Activated B cell treated with CpG ODN at 0.5 μM for 24 hours (primary cell): ENCODE measurements at regions of chr19 and their contacts with region 1.

Region 1: DNA sequence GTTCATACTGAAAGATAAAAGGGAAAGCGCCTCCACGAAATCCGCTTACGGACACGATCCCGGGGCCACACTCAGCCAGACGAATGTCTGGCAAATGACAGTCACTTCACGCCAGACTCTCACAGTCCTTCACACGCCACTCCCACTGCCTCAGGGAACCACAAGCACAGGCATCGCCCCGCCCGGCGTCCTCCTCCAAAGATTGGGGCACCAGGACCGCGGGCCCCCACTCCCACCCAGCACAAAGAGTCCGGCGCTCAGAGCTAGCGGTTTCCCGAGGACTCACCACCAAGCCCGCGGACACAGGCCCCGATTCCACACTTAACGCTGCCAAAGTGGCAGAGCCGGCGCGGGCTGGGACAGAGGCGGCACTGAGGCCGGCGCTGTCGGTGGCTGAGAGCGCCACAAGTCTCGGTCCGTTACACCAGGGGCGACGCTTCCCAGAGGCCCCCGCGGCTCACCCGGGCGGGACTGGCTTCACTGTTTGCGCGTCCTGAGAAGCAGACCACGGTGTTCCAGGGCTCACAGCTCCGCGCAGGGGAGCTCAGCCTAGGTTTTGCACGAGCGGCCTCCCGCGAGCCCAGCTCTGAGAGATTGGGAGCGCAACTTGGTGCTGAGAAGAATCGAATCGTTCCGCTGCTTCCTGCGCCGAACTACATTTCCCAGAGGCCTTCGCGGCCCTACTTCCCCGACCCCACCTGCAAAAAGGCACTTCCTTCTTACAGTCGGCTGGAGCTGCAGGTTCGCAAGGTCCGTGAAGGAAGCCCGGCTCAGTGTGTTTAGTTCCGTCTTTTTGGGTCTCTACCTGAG is at the start of gene ZNF569:
- DNase-seq: peak; percentile 82
- ATAC-seq: peak; percentile 69
- H3K4me3 Mint-ChIP-seq: peak within 1 kb of the TSS; percentile 99
- H3K27ac Mint-ChIP-seq: peak within 1 kb of the TSS; percentile 97
- H3K4me1 Mint-ChIP-seq: peaks cover 42% of the 10 kb centered on the region
- H3K27me3 Mint-ChIP-seq: no peaks in the 10 kb centered on the region
- CTCF ChIP-seq: no peak
- total RNA-seq, gene ZNF569: 6.1 and 6.8 TPM in 2 replicates

Region 2: GRCh38 chr19:36687214-36688056 is 779.6 kb before region 1 on chr19 and contains the start of gene ZNF567:
- CTCF ChIA-PET with region 1: no interaction called
- POLR2A ChIA-PET with region 1: no interaction called
- intact Hi-C with region 1: loop called (anchors 2 kb)
- DNase-seq: peak; percentile 95
- ATAC-seq: peak; percentile 93
- H3K4me3 Mint-ChIP-seq: peak within 1 kb of the TSS; percentile 98
- H3K27ac Mint-ChIP-seq: peak within 1 kb of the TSS; percentile 89
- H3K4me1 Mint-ChIP-seq: peaks cover 34% of the 10 kb centered on the region
- H3K27me3 Mint-ChIP-seq: no peaks in the 10 kb centered on the region
- CTCF ChIP-seq: no peak
- total RNA-seq, gene ZNF567: 13.3 and 15.0 TPM in 2 replicates

Region 3: DNA sequence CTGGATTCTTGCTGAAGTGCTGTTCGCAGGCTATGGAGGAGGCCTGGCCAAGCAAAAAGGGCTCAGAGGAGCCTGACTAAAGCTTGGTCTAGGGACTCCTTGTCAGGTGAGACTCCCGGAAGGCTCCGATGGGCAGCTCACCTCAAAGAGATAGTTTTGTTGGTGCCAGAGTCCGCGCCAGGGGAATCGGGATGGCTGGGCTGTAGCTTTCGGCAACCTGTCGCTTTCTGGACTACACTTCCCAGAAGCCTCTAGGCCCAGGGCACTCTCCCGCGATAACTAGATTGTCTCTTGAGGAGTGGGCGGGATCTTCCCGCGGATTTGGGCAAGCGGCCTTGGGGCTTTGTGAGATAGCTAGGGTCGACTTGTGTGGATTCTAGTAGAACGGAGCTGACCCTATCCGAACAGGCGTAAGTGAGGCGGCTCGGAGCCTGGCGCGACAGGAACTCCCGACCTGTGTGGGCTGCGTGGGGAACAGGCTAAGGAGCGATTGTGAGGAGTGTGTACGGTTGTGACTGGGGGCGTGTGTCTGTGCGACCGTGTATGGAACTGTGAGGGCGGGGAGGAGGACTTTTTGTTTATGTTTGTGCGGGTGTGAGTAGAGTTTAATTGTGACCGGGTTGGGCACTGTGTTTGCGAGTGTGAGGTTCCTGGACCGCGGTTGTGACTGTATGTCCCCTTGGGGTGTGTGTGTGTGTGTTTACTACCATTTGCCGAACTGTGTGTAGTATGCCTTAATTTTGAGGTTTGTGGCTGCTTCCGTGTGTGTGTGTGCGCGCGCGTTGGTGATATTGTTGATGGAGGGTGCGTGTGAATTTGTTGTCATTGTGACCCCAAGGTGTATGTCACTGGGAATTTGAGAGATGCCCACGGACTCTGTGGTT is 616.2 kb before region 1 on chr19 and contains the start of gene ZNF345:
- CTCF ChIA-PET with region 1: no interaction called
- POLR2A ChIA-PET with region 1: interaction called, 4 read pairs
- intact Hi-C with region 1: loop called (anchors 5 kb)
- DNase-seq: peak; percentile 71
- ATAC-seq: peak; percentile 83
- H3K4me3 Mint-ChIP-seq: no peak within 1 kb of the TSS
- H3K27ac Mint-ChIP-seq: no peak within 1 kb of the TSS
- H3K4me1 Mint-ChIP-seq: peaks cover 9% of the 10 kb centered on the region
- H3K27me3 Mint-ChIP-seq: no peaks in the 10 kb centered on the region
- CTCF ChIP-seq: no peak
- total RNA-seq, gene ZNF345: 7.8 and 9.5 TPM in 2 replicates

Region 4: DNA sequence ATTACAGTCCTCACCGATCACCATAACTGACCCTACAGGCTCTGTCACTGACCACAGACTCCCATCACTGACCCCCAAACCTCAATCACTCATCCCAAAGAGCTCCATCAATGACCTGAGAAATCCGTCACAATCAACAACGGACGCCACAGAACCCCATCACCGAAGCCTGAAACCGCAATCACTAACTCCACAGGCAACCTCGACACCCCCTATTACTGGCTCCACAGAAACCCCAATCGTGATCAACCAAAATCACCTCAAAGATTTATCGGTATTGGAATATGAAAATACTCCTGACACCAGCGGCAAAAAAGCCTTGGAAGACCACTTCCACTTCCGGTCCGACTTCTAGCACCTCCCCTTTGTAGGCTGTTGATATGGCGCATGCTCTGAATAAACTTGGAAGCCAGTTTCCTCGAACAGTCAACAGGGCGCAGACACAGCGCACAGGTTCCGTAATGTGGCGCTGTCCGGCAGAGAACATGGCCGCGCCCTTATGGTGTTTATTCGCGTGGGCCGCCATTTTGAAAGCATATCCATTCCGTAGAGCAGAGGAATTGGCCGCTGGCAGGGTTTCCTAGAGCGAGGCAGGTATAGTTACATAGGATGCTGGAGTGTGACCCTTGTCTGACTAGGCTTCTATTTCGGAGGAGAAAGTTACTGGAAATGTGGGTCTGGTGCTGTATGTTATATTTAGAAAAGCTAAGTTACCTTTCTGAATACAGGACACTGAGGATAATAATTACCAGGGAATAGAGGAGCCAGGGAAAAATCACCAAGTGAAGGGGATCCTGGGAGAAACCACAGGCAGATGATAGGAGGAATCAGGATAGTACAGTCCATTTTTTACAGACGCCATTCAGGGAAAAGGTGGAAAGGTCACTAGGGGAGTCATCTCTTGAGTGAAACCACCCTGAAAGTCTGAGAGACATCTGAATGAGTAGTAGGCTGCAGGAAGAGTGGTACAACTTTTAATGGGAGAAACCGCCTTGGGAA is 294.3 kb before region 1 on chr19 and contains the start of gene ZNF585A:
- CTCF ChIA-PET with region 1: no interaction called
- POLR2A ChIA-PET with region 1: no interaction called
- intact Hi-C with region 1: loop called (anchors 1 kb)
- DNase-seq: peak; percentile 77
- ATAC-seq: peak; percentile 99
- H3K4me3 Mint-ChIP-seq: peak within 1 kb of the TSS; percentile 52
- H3K27ac Mint-ChIP-seq: no peak within 1 kb of the TSS
- H3K4me1 Mint-ChIP-seq: peaks cover 4% of the 10 kb centered on the region
- H3K27me3 Mint-ChIP-seq: no peaks in the 10 kb centered on the region
- CTCF ChIP-seq: no peak
- total RNA-seq, gene ZNF585A: 14.4 and 17.0 TPM in 2 replicates

Region 5: DNA sequence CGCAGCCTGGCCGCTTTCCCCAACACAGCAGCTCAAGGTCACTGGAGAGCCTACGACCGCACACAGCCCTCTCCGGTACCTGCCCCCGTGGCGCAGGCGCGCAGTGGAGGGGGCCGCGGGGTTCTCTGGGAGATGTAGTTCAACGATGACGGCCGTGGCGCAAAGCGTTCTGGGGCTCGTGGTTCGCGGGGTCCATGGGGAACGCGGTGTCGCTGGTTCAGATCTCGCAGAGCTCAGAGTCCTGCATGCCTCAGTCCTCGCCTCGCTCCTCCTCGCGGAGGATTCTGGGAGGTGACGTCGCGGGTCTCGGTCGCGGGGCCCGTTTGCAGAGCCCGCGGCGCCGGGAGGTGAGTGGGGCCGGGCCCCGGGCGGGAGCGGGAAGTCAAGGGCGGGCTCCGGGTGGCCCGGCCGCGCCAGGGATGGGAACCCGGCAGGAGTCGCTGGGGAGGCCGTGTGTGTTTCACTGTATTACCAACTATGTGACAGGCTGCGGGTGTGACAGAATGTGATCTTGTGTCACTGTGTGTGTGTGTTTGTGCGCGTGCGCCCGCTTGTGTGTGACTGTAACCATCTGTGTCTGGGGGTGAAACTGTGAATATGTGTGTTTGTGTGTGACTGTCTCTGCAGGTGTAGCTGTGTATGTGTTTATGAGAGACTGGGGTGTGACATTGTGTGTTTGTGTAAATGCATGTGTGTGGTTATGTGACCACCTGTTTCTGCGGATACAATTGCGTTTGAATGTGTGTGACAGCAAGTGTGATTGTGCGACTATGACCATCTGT is 95.9 kb before region 1 on chr19 and contains the start of gene ZNF527:
- CTCF ChIA-PET with region 1: no interaction called
- POLR2A ChIA-PET with region 1: interaction called, 27 read pairs
- intact Hi-C with region 1: loop called (anchors 1 kb)
- DNase-seq: peak; percentile 96
- ATAC-seq: peak; percentile 98
- H3K4me3 Mint-ChIP-seq: peak within 1 kb of the TSS; percentile 99
- H3K27ac Mint-ChIP-seq: peak within 1 kb of the TSS; percentile 98
- H3K4me1 Mint-ChIP-seq: peaks cover 14% of the 10 kb centered on the region
- H3K27me3 Mint-ChIP-seq: no peaks in the 10 kb centered on the region
- CTCF ChIP-seq: no peak
- total RNA-seq, gene ZNF527: 6.3 and 8.1 TPM in 2 replicates

Region 6: DNA sequence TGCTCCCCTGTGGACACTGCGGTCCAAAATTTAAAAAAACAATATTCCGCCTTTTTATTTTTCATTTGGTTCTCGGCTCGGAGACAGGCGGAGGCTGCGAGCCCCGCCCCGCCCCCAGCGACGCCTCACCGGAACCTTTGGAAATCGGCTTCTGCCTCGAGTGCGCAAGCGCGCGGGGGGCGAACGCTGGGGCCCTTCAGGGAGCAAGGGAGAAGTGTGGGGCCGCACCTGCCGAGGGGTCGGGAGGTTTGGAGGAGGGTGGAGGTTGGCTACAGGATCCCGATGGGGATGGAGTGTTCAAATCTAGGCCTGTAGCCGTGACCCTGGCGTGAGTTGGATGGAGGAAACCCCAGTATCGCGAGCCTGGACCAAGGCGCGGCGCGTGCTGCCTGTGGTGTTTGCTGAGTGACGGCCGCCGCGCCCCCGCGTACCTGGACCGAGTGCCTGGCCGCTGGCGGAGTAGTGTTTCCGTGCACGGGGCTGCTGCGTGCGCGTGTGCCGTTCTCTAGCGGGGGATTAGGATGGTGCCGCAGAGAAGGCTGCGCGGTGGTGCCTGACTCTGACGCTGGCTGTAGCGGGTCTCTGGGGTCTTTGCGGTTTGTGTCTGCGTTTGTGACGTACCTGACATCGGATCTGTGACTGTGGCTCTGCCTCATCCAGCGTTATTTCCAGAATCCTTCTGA is 188.8 kb after region 1 on chr19:
- CTCF ChIA-PET with region 1: no interaction called
- POLR2A ChIA-PET with region 1: interaction called, 6 read pairs
- intact Hi-C with region 1: loop called (anchors 2 kb)
- DNase-seq: peak; percentile 80
- ATAC-seq: peak; percentile 67
- H3K4me3 Mint-ChIP-seq: peak overlapping the region; percentile 95
- H3K27ac Mint-ChIP-seq: peak overlapping the region; percentile 95
- H3K4me1 Mint-ChIP-seq: peaks cover 28% of the 10 kb centered on the region
- H3K27me3 Mint-ChIP-seq: no peaks in the 10 kb centered on the region
- CTCF ChIP-seq: no peak